ENCODE measurements at regions of chr2 and their contacts with region 1.

Region 1: DNA sequence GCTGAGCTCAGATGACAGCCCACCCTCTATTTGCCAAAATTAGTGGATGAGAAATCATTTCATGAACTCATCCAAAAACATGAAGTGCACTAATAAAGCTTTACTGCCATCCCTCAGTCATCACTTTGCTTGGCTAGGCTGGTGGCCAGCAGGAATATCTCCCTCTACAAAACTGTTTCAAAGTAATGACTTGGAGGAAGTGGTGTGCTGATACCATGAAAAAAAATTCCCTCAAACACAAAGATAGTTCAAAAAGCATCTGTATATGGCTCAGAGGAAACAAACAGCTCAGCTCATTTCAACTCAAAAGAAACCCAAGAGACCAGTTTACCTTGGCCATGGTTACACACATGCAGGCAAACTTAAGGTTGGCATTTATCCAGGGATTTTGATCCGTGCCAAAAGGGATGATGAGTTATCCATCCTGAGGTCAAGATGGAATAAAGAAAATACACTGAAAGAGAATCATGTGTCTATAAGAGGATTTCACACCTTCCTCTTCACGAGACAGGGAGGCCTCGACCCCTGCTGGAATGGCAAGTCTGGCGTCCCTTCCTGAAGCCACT is 18.4 kb upstream of the WIPF1 start:
- DNase-seq: no peak
- H3K4me3 Mint-ChIP-seq: peak overlapping the region; percentile 5
- H3K27ac Mint-ChIP-seq: peak overlapping the region; percentile 85
- H3K4me1 Mint-ChIP-seq: peaks cover 84% of the 10 kb centered on the region
- H3K27me3 Mint-ChIP-seq: no peaks in the 10 kb centered on the region

Region 2: GRCh38 chr2:174644401-174644800 is 28.4 kb after region 1 on chr2:
- CTCF ChIA-PET with region 1: no interaction called
- POLR2A ChIA-PET with region 1: no interaction called
- intact Hi-C with region 1: no loop called
- DNase-seq: no peak
- H3K4me3 Mint-ChIP-seq: no peak overlapping the region
- H3K27ac Mint-ChIP-seq: no peak overlapping the region
- H3K4me1 Mint-ChIP-seq: peaks cover 10% of the 10 kb centered on the region
- H3K27me3 Mint-ChIP-seq: no peaks in the 10 kb centered on the region

Region 3: DNA sequence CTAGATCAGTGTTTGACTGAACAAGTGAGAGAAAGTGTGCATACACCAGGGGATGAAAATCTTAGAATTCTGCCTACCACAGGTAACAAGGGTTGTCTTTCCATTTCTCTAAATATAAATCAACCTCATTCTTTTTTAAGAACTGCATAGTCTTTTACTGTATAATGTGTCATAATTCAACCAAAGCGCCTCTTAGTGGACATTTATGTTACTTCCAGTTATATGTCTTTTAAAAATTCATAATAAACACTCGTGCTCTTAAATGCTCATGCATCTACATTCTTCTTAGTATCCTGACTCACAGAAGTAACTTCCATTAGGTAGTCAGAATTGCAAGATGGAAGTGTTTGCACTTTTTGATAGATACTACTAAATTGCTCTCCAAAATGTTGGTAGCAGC is 72.1 kb after region 1 on chr2:
- CTCF ChIA-PET with region 1: interaction called, 29 read pairs
- POLR2A ChIA-PET with region 1: no interaction called
- intact Hi-C with region 1: no loop called
- DNase-seq: no peak
- H3K4me3 Mint-ChIP-seq: no peak overlapping the region
- H3K27ac Mint-ChIP-seq: no peak overlapping the region
- H3K4me1 Mint-ChIP-seq: peaks cover 32% of the 10 kb centered on the region
- H3K27me3 Mint-ChIP-seq: no peaks in the 10 kb centered on the region

Region 4: DNA sequence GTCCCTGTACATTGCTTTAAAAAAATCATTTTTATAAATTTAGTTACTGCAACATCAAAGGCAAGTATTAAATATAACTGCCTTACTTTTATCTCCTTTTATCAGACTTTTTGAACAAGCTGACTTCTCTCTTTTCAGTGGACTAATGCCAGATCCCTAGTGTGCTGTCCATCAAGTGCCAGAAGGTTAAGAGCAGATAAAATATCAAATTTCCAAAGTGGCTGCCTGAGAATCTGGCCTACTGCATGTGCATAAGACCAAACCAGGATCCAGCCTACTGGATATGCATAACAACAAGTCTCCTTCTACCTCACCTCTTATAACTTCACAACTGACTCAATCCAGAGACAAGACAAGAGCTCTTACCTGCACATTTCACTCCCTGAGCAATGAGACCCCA is 208.1 kb after region 1 on chr2:
- CTCF ChIA-PET with region 1: no interaction called
- POLR2A ChIA-PET with region 1: no interaction called
- intact Hi-C with region 1: no loop called
- DNase-seq: no peak
- H3K4me3 Mint-ChIP-seq: no peak overlapping the region
- H3K27ac Mint-ChIP-seq: no peak overlapping the region
- H3K4me1 Mint-ChIP-seq: no peaks in the 10 kb centered on the region
- H3K27me3 Mint-ChIP-seq: peaks cover 1% of the 10 kb centered on the region

Measured in activated CD4-positive, alpha-beta memory T cell treated with anti-CD3 and anti-CD28 coated beads for 36 hours (primary cell).